ENCODE measurements at regions of chr6 and their contacts with region 1.

Region 1: DNA sequence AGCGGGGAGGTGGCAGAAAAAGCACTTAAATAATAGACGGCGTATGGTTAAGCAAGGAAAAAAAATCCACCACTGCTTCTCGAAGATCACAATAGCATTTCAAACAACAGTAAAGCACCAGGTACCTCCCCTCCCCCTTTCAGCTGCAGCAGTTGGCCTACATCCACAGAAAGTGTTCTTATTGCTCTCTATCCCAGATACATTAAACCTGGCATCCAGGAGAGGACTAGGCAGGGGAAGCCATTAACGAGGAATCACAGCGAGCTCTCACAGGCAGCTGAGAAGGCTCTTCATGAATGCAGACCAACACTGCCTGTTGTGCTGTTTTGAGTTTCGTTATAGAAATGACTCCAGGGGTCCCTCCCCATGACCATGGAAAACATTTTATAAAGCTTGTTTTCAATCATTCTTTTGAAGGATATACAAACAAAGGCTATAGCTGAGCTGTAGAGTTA is 11.8 kb downstream of the FYN start:
- DNase-seq: peak; percentile 55
- H3K4me3 Mint-ChIP-seq: no peak overlapping the region
- H3K27ac Mint-ChIP-seq: peak overlapping the region; percentile 23
- H3K4me1 Mint-ChIP-seq: peaks cover 91% of the 10 kb centered on the region
- H3K27me3 Mint-ChIP-seq: no peaks in the 10 kb centered on the region

Region 2: GRCh38 chr6:111804627-111805235 is 56.7 kb before region 1 on chr6:
- intact Hi-C with region 1: no loop called
- DNase-seq: peak; percentile 90
- H3K4me3 Mint-ChIP-seq: peak overlapping the region; percentile 82
- H3K27ac Mint-ChIP-seq: peak overlapping the region; percentile 99
- H3K4me1 Mint-ChIP-seq: peaks cover 82% of the 10 kb centered on the region
- H3K27me3 Mint-ChIP-seq: no peaks in the 10 kb centered on the region

Region 3: GRCh38 chr6:111850295-111850937 is 11.0 kb before region 1 on chr6:
- intact Hi-C with region 1: loop called (anchors 1 kb)
- DNase-seq: no peak
- H3K4me3 Mint-ChIP-seq: peak overlapping the region; percentile 51
- H3K27ac Mint-ChIP-seq: peak overlapping the region; percentile 73
- H3K4me1 Mint-ChIP-seq: peaks cover 79% of the 10 kb centered on the region
- H3K27me3 Mint-ChIP-seq: no peaks in the 10 kb centered on the region

Measured in activated CD4-positive, alpha-beta T cell treated with anti-CD3 and anti-CD28 coated beads, Interleukin-2, amount 10 ng/mL, durations not matched to agents 24 days and 14 days (primary cell).